Psoas muscle (tissue), 8 donors: ENCODE measurements at regions of chr2 and their contacts with region 1.

Region 1: GRCh38 chr2:105438104-105438929 is 39.5 kb upstream of the FHL2 start:
- DNase-seq: peak; percentile 70 to 88
- ATAC-seq: peak; percentile 95 to 98 (median 97)
- H3K4me3 ChIP-seq: peak overlapping the region; percentile 26
- H3K27ac ChIP-seq: peak overlapping the region; percentile 46
- H3K4me1 ChIP-seq: peaks cover 18% of the 10 kb centered on the region
- H3K27me3 ChIP-seq: no peaks in the 10 kb centered on the region
- CTCF ChIP-seq: no peak

Region 2: GRCh38 chr2:105470979-105471378 is 32.7 kb after region 1 on chr2:
- intact Hi-C with region 1: no loop called
- DNase-seq: no peak
- ATAC-seq: no peak
- H3K4me3 ChIP-seq: no peak overlapping the region
- H3K27ac ChIP-seq: no peak overlapping the region
- H3K4me1 ChIP-seq: no peaks in the 10 kb centered on the region
- H3K27me3 ChIP-seq: no peaks in the 10 kb centered on the region
- CTCF ChIP-seq: no peak

Region 3: DNA sequence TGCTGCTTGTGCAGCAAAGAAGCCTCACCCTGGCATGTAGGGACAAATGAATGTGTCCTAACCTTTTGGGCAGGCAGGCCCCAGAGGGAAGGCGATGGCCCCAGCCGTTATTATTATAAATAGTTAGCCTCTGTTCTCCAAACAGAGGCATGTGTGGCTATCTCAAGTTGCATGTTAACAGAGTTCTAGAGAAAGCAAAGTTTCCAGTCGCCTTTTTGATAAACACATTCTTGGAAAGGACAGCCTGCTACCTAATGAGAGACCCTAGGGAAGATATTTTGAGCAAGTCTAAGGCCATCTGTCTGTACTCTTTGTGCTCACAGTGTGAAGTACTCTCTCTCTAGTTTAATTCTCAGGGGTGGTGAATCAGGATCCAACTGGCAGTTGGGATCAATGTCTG is 58.0 kb after region 1 on chr2:
- intact Hi-C with region 1: loop called in 1 of 2 experiments (anchors 10 kb)
- DNase-seq: peak in 1 of 2 donors; percentile 69
- ATAC-seq: peak; percentile 27 to 78 (median 67)
- H3K4me3 ChIP-seq: no peak overlapping the region
- H3K27ac ChIP-seq: peak overlapping the region; percentile 74
- H3K4me1 ChIP-seq: peaks cover 28% of the 10 kb centered on the region
- H3K27me3 ChIP-seq: no peaks in the 10 kb centered on the region
- CTCF ChIP-seq: no peak